Breast epithelium (tissue), 4 donors: ENCODE measurements at regions of chr11 and their contacts with region 1.

Region 1: GRCh38 chr11:2306877-2307500 is 5.2 kb downstream of the TSPAN32 start:
- DNase-seq: peak in 1 of 2 donors; percentile 47
- H3K4me3 ChIP-seq: no peak overlapping the region
- H3K27ac ChIP-seq: peak overlapping the region; percentile 29 to 86
- H3K4me1 ChIP-seq: peaks cover 0 to 11% of the 10 kb centered on the region in 2 donors
- H3K27me3 ChIP-seq: no peaks in the 10 kb centered on the region
- CTCF ChIP-seq: no peak
- POLR2A ChIP-seq: no peak

Region 2: DNA sequence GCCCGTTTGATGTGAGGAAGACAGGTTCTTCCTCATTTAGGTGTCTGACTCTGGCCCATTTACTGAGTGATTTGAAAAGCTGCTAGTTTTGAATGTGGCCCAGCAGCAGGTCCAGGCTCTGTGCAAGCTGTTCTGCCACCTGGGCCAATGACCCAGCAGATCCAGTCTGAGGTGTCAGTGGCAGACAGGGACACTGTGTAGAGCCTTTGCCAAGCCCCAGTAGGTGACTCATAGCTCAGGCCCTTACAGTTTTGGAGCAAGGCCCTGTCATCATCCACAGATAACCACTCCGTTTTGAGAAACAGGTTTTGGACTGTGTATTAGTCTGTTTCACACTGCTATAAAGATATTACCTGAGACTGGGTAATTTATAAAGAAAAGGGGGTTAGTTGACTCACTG is 18.7 kb after region 1 on chr11:
- intact Hi-C with region 1: loop called (anchors 1 kb)
- DNase-seq: peak; percentile 60 to 88
- H3K4me3 ChIP-seq: no peak overlapping the region
- H3K27ac ChIP-seq: peak overlapping the region; percentile 58 to 73
- H3K4me1 ChIP-seq: peaks cover 0 to 9% of the 10 kb centered on the region in 2 donors
- H3K27me3 ChIP-seq: no peaks in the 10 kb centered on the region
- CTCF ChIP-seq: no peak
- POLR2A ChIP-seq: no peak